PC-9 (cell line): ENCODE measurements at regions of chr12 and their contacts with region 1.

Region 1: GRCh38 chr12:63826006-63826585 is 18.4 kb upstream of the SRGAP1 start:
- DNase-seq: peak in 1 of 2 experiments; percentile 49
- H3K4me3 ChIP-seq: no peak overlapping the region
- H3K27ac ChIP-seq: no peak overlapping the region
- H3K4me1 ChIP-seq: no peaks in the 10 kb centered on the region
- H3K27me3 ChIP-seq: no peaks in the 10 kb centered on the region
- CTCF ChIP-seq: peak; percentile 85

Region 2: DNA sequence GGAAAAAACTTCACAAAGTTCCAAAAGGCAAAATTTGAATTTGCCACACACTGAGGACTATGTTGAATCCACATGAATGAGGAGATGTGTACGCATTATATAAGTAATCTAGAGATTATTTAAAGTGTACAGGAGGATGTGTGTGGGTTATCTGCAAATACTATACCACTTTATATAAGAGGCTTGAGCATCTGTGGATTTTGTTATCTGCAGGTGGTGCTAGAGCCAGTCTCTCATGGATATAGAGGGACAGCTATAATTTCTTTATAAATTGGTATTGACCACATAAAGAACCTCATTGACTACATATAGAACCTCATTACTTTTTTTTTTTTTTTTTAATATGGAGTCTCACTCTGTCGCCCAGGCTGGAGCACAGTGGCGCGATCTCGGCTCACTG is 78.5 kb before region 1 on chr12:
- CTCF ChIA-PET with region 1: no interaction called
- POLR2A ChIA-PET with region 1: no interaction called
- intact Hi-C with region 1: no loop called
- DNase-seq: no peak
- H3K4me3 ChIP-seq: no peak overlapping the region
- H3K27ac ChIP-seq: no peak overlapping the region
- H3K4me1 ChIP-seq: no peaks in the 10 kb centered on the region
- H3K27me3 ChIP-seq: no peaks in the 10 kb centered on the region
- CTCF ChIP-seq: no peak

Region 3: DNA sequence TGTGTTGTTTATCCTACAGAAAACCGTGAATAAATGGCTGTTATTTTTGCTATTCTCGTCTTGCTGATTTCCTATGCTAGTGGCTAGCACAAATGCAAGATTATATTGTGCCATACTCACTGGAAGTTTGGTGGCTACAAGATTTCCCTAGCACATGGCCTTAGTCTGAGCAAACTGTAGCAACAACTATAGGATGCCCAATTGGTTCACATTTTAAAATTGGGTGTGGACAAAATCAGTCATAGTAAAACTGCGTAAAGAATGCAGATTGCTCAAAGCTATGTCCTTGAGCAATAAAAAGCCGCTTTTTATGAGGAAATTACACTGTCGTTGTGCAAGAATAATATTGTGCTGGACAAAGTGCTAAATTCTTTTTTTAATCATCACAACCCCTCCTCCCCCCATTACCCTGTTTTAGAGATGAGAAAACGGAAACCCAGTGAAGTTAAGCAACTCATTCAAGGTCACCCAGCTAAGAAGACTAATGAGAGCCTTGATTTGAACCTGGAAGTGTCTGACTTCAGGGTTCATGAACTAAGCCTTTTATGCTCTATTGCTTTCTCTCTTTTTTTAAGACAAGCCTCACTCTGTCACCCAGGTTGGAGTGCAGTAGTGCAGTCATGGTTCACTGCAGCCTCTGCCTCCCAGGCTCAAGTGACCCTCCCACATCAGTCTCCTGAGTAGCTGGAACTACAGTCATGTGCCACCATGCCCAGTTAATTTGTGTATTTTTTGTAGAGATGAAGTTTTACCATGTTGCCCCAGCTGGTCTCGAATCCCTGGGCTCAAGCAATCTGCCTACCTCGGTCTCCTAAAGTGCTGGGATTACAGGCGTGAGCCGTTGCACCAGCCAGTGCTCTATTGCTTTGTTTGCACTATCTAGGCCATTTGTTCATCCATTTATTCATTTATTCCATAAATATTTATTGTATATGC is 92.0 kb after region 1 on chr12:
- CTCF ChIA-PET with region 1: no interaction called
- POLR2A ChIA-PET with region 1: no interaction called
- intact Hi-C with region 1: no loop called
- DNase-seq: peak; percentile 50 to 99
- H3K4me3 ChIP-seq: peak overlapping the region; percentile 20
- H3K27ac ChIP-seq: peak overlapping the region; percentile 97
- H3K4me1 ChIP-seq: peaks cover 92% of the 10 kb centered on the region
- H3K27me3 ChIP-seq: no peaks in the 10 kb centered on the region
- CTCF ChIP-seq: no peak

Region 4: GRCh38 chr12:64392221-64392620 is 566.1 kb after region 1 on chr12:
- CTCF ChIA-PET with region 1: no interaction called
- POLR2A ChIA-PET with region 1: no interaction called
- intact Hi-C with region 1: loop called (anchors 1 kb)
- DNase-seq: no peak
- H3K4me3 ChIP-seq: no peak overlapping the region
- H3K27ac ChIP-seq: no peak overlapping the region
- H3K4me1 ChIP-seq: peaks cover 7% of the 10 kb centered on the region
- H3K27me3 ChIP-seq: no peaks in the 10 kb centered on the region
- CTCF ChIP-seq: peak; percentile 52; the same call in 1 of the 2 replicates